GM12878 (cell line): ENCODE measurements at regions of chr7 and their contacts with region 1.

Region 1: GRCh38 chr7:8217200-8218068 is 44.5 kb downstream of the ICA1 start:
- DNase-seq: peak; percentile 43
- ATAC-seq: peak; percentile 80
- H3K4me3 ChIP-seq: no peak overlapping the region
- H3K27ac ChIP-seq: no peak overlapping the region
- H3K4me1 ChIP-seq: no peaks in the 10 kb centered on the region
- H3K27me3 ChIP-seq: no peaks in the 10 kb centered on the region
- CTCF ChIP-seq: peak; percentile 42 to 67 (median 45); a peak in 4 of 6 replicates
- EP300 ChIP-seq: no peak
- POLR2A ChIP-seq: no peak
- RAD21 ChIP-seq: peak; percentile 81

Region 2: DNA sequence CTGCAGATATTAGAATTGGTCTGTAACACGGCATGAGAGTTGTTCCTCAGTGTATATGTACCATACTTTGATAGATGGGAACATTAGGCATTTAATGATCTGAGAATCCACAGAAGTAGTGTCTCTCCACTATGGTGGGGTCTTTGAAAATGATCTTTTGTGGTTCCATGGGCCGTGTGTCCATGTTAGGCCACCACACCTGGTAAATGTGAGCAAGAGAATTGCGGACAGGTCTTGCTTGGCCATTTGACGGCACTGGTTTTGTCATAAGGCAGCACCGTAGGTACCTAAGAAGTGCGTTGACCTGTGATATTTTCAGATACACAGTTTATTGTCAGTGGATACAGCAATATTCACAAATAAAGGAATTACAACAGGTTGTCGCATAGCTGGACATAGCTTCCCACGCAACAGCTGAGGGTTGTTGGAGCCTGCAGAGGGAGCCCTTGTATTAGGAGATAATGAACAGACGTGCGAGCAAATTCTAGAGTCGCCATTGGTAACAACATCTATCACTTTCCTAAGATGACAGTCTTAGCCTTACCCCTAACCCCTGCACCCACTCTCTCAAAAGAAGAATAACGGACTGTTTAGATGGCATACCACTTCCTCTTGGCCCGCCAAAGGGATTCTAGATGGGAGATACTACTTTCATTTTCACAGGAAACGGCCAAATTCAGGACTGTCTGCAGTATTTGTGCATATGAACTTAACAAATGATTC is 793.1 kb before region 1 on chr7:
- CTCF ChIA-PET with region 1: interaction called, 17 read pairs
- POLR2A ChIA-PET with region 1: no interaction called
- RAD21 ChIA-PET with region 1: interaction called, 9 read pairs
- SMC1A ChIA-PET with region 1: interaction called, 30 read pairs
- in situ Hi-C with region 1: loop called (anchors 10 kb)
- intact Hi-C with region 1: loop called (anchors 5 kb)
- DNase-seq: peak; percentile 37
- ATAC-seq: peak; percentile 92
- H3K4me3 ChIP-seq: peak overlapping the region; percentile 41
- H3K27ac ChIP-seq: no peak overlapping the region
- H3K4me1 ChIP-seq: no peaks in the 10 kb centered on the region
- H3K27me3 ChIP-seq: no peaks in the 10 kb centered on the region
- CTCF ChIP-seq: peak; percentile 66 to 75 (median 66)
- EP300 ChIP-seq: no peak
- POLR2A ChIP-seq: no peak
- RAD21 ChIP-seq: peak; percentile 76

Region 3: DNA sequence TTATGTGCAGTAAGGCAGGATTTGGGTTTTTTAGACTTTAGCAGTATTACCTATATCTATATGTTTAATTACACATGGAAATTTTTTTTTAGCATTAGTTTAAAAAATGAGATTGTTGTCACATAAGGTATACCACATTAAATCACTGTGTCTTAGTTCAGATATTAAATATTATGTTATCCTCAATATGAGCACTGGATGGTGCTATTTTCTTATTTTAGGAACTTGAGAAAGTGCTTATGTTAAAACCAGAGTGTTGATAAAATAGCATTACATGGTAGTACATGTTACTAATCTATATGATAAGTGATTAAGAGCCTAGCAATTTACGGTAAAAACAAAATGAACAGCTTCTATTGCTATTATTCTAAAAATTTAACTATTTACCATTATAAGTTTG is 622.0 kb before region 1 on chr7:
- CTCF ChIA-PET with region 1: interaction called, 28 read pairs
- POLR2A ChIA-PET with region 1: no interaction called
- RAD21 ChIA-PET with region 1: interaction called, 6 read pairs
- SMC1A ChIA-PET with region 1: interaction called, 12 read pairs
- in situ Hi-C with region 1: loop called (anchors 25 kb)
- intact Hi-C with region 1: loop called (anchors 5 kb)
- DNase-seq: no peak
- ATAC-seq: peak; percentile 60
- H3K4me3 ChIP-seq: no peak overlapping the region
- H3K27ac ChIP-seq: no peak overlapping the region
- H3K4me1 ChIP-seq: no peaks in the 10 kb centered on the region
- H3K27me3 ChIP-seq: no peaks in the 10 kb centered on the region
- CTCF ChIP-seq: peak in 1 of 3 experiments; percentile 13; a peak in 1 of 6 replicates
- EP300 ChIP-seq: no peak
- POLR2A ChIP-seq: no peak
- RAD21 ChIP-seq: peak; percentile 29; the same call in 1 of the 2 replicates

Region 4: GRCh38 chr7:7640221-7641128 is 577.0 kb before region 1 on chr7 and contains the start of gene UMAD1:
- CTCF ChIA-PET with region 1: interaction called, 3 read pairs
- POLR2A ChIA-PET with region 1: no interaction called
- RAD21 ChIA-PET with region 1: interaction called, 3 read pairs
- SMC1A ChIA-PET with region 1: interaction called, 5 read pairs
- in situ Hi-C with region 1: no loop called
- intact Hi-C with region 1: loop called (anchors 5 kb)
- DNase-seq: peak; percentile 99
- ATAC-seq: peak; percentile 95
- H3K4me3 ChIP-seq: peak within 1 kb of the TSS; percentile 93
- H3K27ac ChIP-seq: peak within 1 kb of the TSS; percentile 79
- H3K4me1 ChIP-seq: no peaks in the 10 kb centered on the region
- H3K27me3 ChIP-seq: no peaks in the 10 kb centered on the region
- CTCF ChIP-seq: no peak
- EP300 ChIP-seq: 0 out of 4 replicates have a peak, but pooled peaks of 1 of the 2 experiments have one; percentile 15
- POLR2A ChIP-seq: peak; percentile 95
- RAD21 ChIP-seq: no peak
- polyA plus RNA-seq, gene UMAD1: 8.7 to 8.8 TPM

Region 5: GRCh38 chr7:8201846-8202441 is 15.5 kb before region 1 on chr7:
- CTCF ChIA-PET with region 1: interaction called, 8 read pairs
- POLR2A ChIA-PET with region 1: no interaction called
- RAD21 ChIA-PET with region 1: interaction called, 4 read pairs
- SMC1A ChIA-PET with region 1: interaction called, 19 read pairs
- in situ Hi-C with region 1: no loop called
- intact Hi-C with region 1: no loop called
- DNase-seq: no peak
- ATAC-seq: peak; percentile 66
- H3K4me3 ChIP-seq: no peak overlapping the region
- H3K27ac ChIP-seq: no peak overlapping the region
- H3K4me1 ChIP-seq: no peaks in the 10 kb centered on the region
- H3K27me3 ChIP-seq: no peaks in the 10 kb centered on the region
- CTCF ChIP-seq: no peak
- EP300 ChIP-seq: no peak
- POLR2A ChIP-seq: no peak
- RAD21 ChIP-seq: no peak

Region 6: DNA sequence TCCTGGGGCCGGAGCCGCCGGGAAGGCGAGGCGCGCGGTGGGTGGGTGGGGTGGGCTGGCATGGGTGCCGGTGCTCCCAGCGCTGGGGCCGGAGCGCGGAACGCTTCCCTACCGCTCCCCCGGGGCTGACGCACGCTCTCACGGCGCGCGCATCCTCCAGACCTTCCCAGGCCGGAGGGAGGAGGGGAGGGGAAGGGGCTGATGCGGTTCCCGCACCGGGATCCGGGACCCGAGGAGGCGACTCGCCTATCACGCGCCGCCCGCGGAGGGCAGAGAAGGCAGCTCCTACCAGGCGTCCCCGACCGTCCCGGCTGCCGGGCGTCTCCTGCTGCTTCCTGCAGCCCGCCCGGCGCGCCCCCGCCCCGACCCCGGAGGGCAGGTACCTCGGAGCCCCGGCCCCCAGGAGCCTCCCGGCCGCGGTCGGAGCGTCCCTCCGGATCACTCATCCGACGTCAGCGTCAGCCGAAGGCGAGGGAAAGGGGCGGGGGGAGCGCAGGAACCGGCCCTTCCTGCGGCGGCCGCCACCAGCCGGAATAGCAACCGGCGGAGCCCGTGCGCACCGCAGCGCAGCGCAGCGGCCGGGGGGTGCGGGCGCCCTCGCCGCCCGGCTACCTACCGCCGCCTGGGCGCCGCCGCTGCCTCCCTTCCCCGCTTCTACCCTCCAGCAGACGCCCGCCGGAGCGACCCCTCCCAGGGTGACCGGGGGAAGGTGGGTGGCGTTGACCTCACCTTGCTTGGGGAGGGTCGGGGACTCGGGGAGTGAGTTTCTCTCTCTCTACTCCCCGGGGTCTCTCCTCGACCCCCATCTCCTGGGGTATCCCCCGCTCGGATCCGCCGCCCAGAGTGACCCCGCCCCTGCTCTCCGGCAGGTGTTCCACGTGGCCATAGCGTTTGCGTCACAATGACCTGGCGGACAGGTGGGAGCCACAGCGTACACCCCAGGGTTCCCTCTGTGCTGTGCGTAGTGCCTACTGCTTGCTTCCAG is 44.6 kb after region 1 on chr7 and contains the start of gene ICA1:
- CTCF ChIA-PET with region 1: no interaction called
- POLR2A ChIA-PET with region 1: no interaction called
- RAD21 ChIA-PET with region 1: no interaction called
- SMC1A ChIA-PET with region 1: no interaction called
- in situ Hi-C with region 1: no loop called
- intact Hi-C with region 1: no loop called
- DNase-seq: no peak
- ATAC-seq: peak; percentile 86
- H3K4me3 ChIP-seq: peak within 1 kb of the TSS; percentile 51; the same call in 1 of the 2 replicates
- H3K27ac ChIP-seq: no peak within 1 kb of the TSS
- H3K4me1 ChIP-seq: no peaks in the 10 kb centered on the region
- H3K27me3 ChIP-seq: peaks cover 6 to 9% of the 10 kb centered on the region in 2 experiments; a peak in 3 of 4 replicates
- CTCF ChIP-seq: no peak
- EP300 ChIP-seq: no peak
- POLR2A ChIP-seq: no peak
- RAD21 ChIP-seq: no peak
- polyA plus RNA-seq, gene ICA1: 6.5 to 12.4 TPM

Region 7: GRCh38 chr7:8277394-8277982 is 60.1 kb after region 1 on chr7:
- CTCF ChIA-PET with region 1: no interaction called
- POLR2A ChIA-PET with region 1: no interaction called
- RAD21 ChIA-PET with region 1: no interaction called
- SMC1A ChIA-PET with region 1: no interaction called
- in situ Hi-C with region 1: no loop called
- intact Hi-C with region 1: no loop called
- DNase-seq: no peak
- ATAC-seq: peak; percentile 55
- H3K4me3 ChIP-seq: no peak overlapping the region
- H3K27ac ChIP-seq: no peak overlapping the region
- H3K4me1 ChIP-seq: no peaks in the 10 kb centered on the region
- H3K27me3 ChIP-seq: peaks cover 0 to 1% of the 10 kb centered on the region in 2 experiments; a peak in 2 of 4 replicates
- CTCF ChIP-seq: peak; percentile 11 to 30 (median 24); a peak in 4 of 6 replicates
- EP300 ChIP-seq: no peak
- POLR2A ChIP-seq: no peak
- RAD21 ChIP-seq: peak; percentile 43

Region 8: DNA sequence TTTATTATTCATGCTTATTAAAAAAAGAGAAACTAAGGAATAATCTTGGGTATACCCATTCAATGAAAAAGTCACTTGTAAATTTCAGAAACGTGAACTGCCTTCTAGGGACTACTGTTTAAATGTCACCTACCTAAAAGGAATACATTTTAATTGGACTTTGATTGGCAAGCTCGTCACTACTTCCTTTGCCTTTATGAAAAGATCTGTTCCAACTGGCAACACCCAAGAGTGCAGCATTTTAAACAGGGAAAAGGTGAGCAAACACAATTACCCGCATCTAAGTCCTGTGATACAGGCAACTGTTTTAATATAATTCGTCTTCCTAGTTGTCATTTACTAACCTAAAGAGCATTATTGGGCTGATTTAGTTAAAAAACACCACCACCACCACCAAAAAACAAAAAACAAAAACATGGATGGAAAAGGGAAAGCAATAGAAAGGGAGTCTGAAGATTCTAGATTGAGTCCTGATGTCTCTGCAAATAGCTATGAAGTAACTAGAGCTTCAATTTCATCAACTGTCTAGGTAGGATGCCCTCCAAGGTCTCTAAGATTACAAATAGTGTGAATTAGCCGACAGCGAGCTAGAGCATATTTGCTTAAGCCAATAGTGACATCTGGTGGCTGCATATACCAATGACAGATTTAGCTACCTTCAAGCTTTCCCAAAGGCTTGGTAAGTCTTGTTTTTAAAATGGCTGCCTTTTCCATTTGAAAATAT is 78.4 kb after region 1 on chr7:
- CTCF ChIA-PET with region 1: interaction called, 8 read pairs
- POLR2A ChIA-PET with region 1: interaction called, 4 read pairs
- RAD21 ChIA-PET with region 1: interaction called, 16 read pairs
- SMC1A ChIA-PET with region 1: interaction called, 3 read pairs
- in situ Hi-C with region 1: no loop called
- intact Hi-C with region 1: loop called (anchors 5 kb)
- DNase-seq: peak; percentile 43
- ATAC-seq: peak; percentile 99
- H3K4me3 ChIP-seq: no peak overlapping the region
- H3K27ac ChIP-seq: no peak overlapping the region
- H3K4me1 ChIP-seq: no peaks in the 10 kb centered on the region
- H3K27me3 ChIP-seq: no peaks in the 10 kb centered on the region
- CTCF ChIP-seq: peak; percentile 64 to 90 (median 75)
- EP300 ChIP-seq: no peak
- POLR2A ChIP-seq: no peak
- RAD21 ChIP-seq: peak; percentile 92

Region 9: GRCh38 chr7:8305625-8306381 is 88.4 kb after region 1 on chr7:
- CTCF ChIA-PET with region 1: no interaction called
- POLR2A ChIA-PET with region 1: no interaction called
- RAD21 ChIA-PET with region 1: no interaction called
- SMC1A ChIA-PET with region 1: no interaction called
- in situ Hi-C with region 1: no loop called
- intact Hi-C with region 1: no loop called
- DNase-seq: no peak
- ATAC-seq: no peak
- H3K4me3 ChIP-seq: no peak overlapping the region
- H3K27ac ChIP-seq: no peak overlapping the region
- H3K4me1 ChIP-seq: no peaks in the 10 kb centered on the region
- H3K27me3 ChIP-seq: no peaks in the 10 kb centered on the region
- CTCF ChIP-seq: no peak
- EP300 ChIP-seq: no peak
- POLR2A ChIP-seq: no peak
- RAD21 ChIP-seq: no peak

Region 10: GRCh38 chr7:8389593-8390261 is 172.3 kb after region 1 on chr7:
- CTCF ChIA-PET with region 1: no interaction called
- POLR2A ChIA-PET with region 1: no interaction called
- RAD21 ChIA-PET with region 1: no interaction called
- SMC1A ChIA-PET with region 1: no interaction called
- in situ Hi-C with region 1: no loop called
- intact Hi-C with region 1: no loop called
- DNase-seq: no peak
- ATAC-seq: no peak
- H3K4me3 ChIP-seq: no peak overlapping the region
- H3K27ac ChIP-seq: no peak overlapping the region
- H3K4me1 ChIP-seq: peaks cover 21% of the 10 kb centered on the region
- H3K27me3 ChIP-seq: no peaks in the 10 kb centered on the region; a peak in 1 of 4 replicates
- CTCF ChIP-seq: no peak
- EP300 ChIP-seq: no peak
- POLR2A ChIP-seq: no peak
- RAD21 ChIP-seq: no peak